Mammary epithelial cell (primary cell): ENCODE measurements at regions of chr19 and their contacts with region 1.

Region 1: GRCh38 chr19:6862673-6863078 is 24.7 kb upstream of the ADGRE1 start:
- DNase-seq: peak; percentile 78
- H3K4me3 ChIP-seq: no peak overlapping the region
- H3K27ac ChIP-seq: no peak overlapping the region
- H3K4me1 ChIP-seq: peaks cover 3% of the 10 kb centered on the region
- H3K27me3 ChIP-seq: no peaks in the 10 kb centered on the region
- CTCF ChIP-seq: peak; percentile 87 to 88

Region 2: GRCh38 chr19:6125571-6125989 is 737.1 kb before region 1 on chr19:
- CTCF ChIA-PET with region 1: interaction called, 8 read pairs
- dilution Hi-C with region 1: no loop called
- in situ Hi-C with region 1: loop called in 1 of 2 experiments (anchors 25 kb)
- intact Hi-C with region 1: loop called (anchors 2 kb)
- DNase-seq: peak; percentile 73
- H3K4me3 ChIP-seq: no peak overlapping the region
- H3K27ac ChIP-seq: no peak overlapping the region
- H3K4me1 ChIP-seq: no peaks in the 10 kb centered on the region
- H3K27me3 ChIP-seq: no peaks in the 10 kb centered on the region
- CTCF ChIP-seq: peak; percentile 96 to 97

Region 3: GRCh38 chr19:6424939-6425731 is 437.5 kb before region 1 on chr19:
- CTCF ChIA-PET with region 1: interaction called, 13 read pairs
- dilution Hi-C with region 1: no loop called
- in situ Hi-C with region 1: no loop called
- intact Hi-C with region 1: no loop called
- DNase-seq: peak; percentile 100
- H3K4me3 ChIP-seq: peak overlapping the region; percentile 6 to 21 (median 7)
- H3K27ac ChIP-seq: peak overlapping the region; percentile 26
- H3K4me1 ChIP-seq: peaks cover 19% of the 10 kb centered on the region
- H3K27me3 ChIP-seq: no peaks in the 10 kb centered on the region
- CTCF ChIP-seq: no peak

Region 4: DNA sequence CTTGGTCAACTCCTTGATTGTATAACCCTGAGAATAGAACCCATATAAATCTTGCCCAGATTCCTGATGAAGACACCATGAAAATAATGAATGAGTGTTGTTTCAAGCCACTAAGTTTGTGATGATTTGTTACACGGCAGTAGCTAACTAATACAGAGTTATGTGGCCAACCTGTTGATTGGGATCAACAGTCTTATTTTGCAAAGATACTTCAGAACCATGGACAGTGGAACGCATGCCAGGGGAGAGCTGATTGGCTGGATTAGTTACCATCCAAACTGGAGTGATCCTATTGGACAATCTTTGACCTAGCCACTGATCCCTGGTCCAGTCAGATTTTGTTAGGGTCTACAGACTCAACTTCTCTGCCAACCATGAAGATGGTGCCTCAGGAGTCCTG is 298.3 kb before region 1 on chr19:
- CTCF ChIA-PET with region 1: no interaction called
- dilution Hi-C with region 1: no loop called
- in situ Hi-C with region 1: no loop called
- intact Hi-C with region 1: loop called (anchors 1 kb)
- DNase-seq: peak; percentile 47
- H3K4me3 ChIP-seq: no peak overlapping the region
- H3K27ac ChIP-seq: no peak overlapping the region
- H3K4me1 ChIP-seq: no peaks in the 10 kb centered on the region
- H3K27me3 ChIP-seq: no peaks in the 10 kb centered on the region
- CTCF ChIP-seq: no peak

Region 5: DNA sequence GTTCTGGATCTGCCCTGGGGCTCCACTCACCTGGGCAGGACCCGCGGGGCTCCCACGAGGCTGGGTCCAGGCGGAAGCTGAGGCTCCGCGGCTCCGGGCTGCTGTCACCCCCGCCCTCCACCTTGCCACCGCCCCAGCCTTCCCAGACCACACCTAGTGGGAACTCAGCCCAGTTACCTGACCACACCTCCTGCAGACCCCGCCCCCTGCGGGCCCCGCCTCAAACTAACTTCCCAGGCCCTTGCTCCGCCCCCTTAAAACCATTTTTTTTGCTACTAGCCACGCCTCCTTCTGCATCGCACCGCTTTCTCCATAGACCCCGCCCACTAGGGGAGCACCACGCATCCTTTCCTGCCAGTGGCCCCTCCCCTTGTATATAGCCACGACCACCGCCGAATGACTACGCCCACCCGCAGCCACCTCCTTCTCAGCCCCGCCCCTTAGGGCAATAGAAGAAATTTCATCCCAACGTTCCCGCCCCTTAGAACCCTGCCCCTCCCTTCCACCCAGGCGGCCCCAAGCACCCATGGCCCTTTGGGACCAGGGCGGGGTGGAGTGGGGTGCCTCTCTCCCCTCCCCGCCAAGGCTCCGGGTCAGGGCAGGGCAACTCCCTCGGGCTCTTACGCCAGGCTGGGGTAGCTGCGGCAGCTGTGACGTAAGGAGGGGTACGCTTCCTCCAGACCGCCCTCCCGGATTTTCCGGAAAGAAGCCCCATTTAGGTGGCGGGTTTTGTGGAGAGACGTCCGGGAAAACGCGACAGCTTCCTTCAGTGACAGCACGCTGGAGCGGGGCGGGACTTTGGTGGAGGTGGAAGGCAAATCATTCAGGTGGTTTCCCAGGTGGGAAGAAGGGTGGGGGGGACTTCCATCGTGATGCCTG is 95.1 kb before region 1 on chr19 and contains the start of gene SH2D3A:
- CTCF ChIA-PET with region 1: no interaction called
- dilution Hi-C with region 1: no loop called
- in situ Hi-C with region 1: no loop called
- intact Hi-C with region 1: loop called (anchors 2 kb)
- DNase-seq: peak; percentile 96
- H3K4me3 ChIP-seq: peak within 1 kb of the TSS; percentile 75 to 86 (median 81)
- H3K27ac ChIP-seq: peak within 1 kb of the TSS; percentile 94
- H3K4me1 ChIP-seq: peaks cover 16% of the 10 kb centered on the region
- H3K27me3 ChIP-seq: no peaks in the 10 kb centered on the region
- CTCF ChIP-seq: no peak
- total RNA-seq, gene SH2D3A: 59.0 to 95.1 TPM